ENCODE measurements at regions of chr1 and their contacts with region 1.

Region 1: GRCh38 chr1:248858891-248859889 is at the start of gene ZNF692:
- DNase-seq: peak; percentile 95 to 98
- ATAC-seq: peak; percentile 85 to 94 (median 88)
- H3K4me3 ChIP-seq: peak within 1 kb of the TSS; percentile 66
- H3K4me3 Mint-ChIP-seq: peak within 1 kb of the TSS; percentile 86
- H3K27ac ChIP-seq: peak within 1 kb of the TSS; percentile 92
- H3K27ac Mint-ChIP-seq: peak within 1 kb of the TSS; percentile 90 to 94
- H3K4me1 ChIP-seq: peaks cover 64% of the 10 kb centered on the region
- H3K4me1 Mint-ChIP-seq: peaks cover 47 to 60% of the 10 kb centered on the region in 2 donors
- H3K27me3 ChIP-seq: no peaks in the 10 kb centered on the region
- H3K27me3 Mint-ChIP-seq: no peaks in the 10 kb centered on the region
- CTCF ChIP-seq: peak; percentile 5
- total RNA-seq, gene ZNF692: 50.4 to 58.7 (median 52.3) TPM

Region 2: DNA sequence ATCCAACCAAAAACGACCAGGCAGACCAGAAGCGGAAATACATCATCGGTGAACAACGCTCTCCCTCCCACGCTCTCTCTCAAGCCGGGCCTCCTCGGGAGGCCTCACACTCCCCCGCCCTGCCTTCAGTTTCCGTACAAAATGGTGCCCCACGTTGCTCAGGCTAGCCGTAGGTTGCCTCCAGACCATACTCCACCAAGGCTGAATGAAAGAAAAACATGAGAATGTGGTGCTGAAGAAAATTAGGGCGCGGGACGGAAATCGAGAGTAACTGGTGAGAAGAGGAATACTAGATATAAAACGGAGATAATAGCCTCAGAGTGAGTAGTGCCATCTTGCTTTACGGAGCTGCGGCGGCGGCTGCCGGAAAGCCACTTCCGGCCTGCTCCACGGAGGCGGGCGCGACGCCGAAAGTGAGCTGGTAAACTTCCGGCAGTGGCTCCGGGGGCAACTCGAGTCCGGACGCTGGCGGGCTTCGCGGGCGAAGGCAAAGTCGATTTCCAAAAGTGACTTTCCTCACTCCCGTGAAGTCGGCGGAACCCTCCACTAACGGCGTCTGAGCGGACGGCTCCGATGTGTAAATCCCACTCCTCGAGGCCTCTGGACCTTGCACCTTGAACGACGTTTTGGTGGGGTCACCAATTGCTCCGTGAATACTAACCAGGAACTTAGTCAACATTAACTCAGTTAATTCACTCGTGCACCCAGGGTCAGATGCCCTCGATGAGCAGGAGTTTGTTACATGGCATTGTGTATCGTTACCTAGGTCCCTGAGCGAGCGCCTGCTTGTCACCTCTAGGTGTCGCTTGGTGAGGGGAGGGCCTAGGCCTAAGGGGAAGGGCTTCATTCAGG is 33.1 kb before region 1 on chr1 and contains the start of gene SH3BP5L:
- intact Hi-C with region 1: loop called (anchors 1 kb)
- DNase-seq: peak; percentile 87 to 96
- ATAC-seq: peak; percentile 85 to 95 (median 87)
- H3K4me3 ChIP-seq: peak within 1 kb of the TSS; percentile 93
- H3K4me3 Mint-ChIP-seq: peak within 1 kb of the TSS; percentile 96
- H3K27ac ChIP-seq: peak within 1 kb of the TSS; percentile 99
- H3K27ac Mint-ChIP-seq: peak within 1 kb of the TSS; percentile 96
- H3K4me1 ChIP-seq: peaks cover 46% of the 10 kb centered on the region
- H3K4me1 Mint-ChIP-seq: peaks cover 55 to 56% of the 10 kb centered on the region in 2 donors
- H3K27me3 ChIP-seq: no peaks in the 10 kb centered on the region
- H3K27me3 Mint-ChIP-seq: no peaks in the 10 kb centered on the region
- CTCF ChIP-seq: peak; percentile 79
- total RNA-seq, gene SH3BP5L: 19.0 to 27.5 (median 22.9) TPM

Region 3: DNA sequence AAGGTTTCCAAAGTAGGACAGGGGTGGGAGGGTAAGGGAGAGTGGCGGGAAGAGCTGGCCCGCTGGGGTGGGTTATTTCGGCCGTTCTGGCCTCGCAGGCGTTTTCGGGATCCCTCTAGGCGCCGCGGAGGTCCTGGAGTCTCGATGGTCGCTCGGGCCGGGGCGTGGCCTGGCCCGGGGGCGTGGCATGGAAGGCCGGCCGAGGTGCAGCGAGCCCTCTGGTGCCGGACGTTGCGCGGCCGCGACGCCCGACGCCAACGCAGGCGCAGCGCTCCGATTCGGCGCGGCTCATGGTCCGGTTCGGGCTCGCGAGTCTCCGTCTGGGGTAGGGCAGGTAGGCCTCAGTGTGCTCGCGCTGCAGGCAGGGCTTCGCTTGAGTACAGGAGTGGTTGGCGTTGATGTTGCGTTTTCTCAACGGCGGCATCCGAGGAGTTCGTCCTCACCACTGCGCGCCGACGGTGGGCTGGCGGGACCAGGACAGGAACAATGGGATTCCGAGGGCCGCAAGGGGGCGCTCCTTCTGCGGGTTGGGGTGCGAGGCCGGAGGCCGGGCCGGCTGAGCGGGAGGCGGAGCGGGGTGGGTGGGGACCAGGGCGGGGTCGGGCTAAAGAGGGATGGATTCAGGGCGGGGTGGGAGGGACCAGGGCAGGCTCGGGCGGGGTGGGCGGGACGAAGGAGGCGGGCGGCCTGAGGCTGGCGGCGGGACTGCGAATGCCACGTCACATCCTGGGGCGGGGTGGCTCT is 47.0 kb after region 1 on chr1 and contains the start of gene PGBD2:
- intact Hi-C with region 1: loop called (anchors 1 kb)
- DNase-seq: peak; percentile 92 to 96
- ATAC-seq: peak; percentile 82 to 90 (median 84)
- H3K4me3 ChIP-seq: peak within 1 kb of the TSS; percentile 70
- H3K4me3 Mint-ChIP-seq: peak within 1 kb of the TSS; percentile 94
- H3K27ac ChIP-seq: peak within 1 kb of the TSS; percentile 90
- H3K27ac Mint-ChIP-seq: peak within 1 kb of the TSS; percentile 92 to 93
- H3K4me1 ChIP-seq: peaks cover 14% of the 10 kb centered on the region
- H3K4me1 Mint-ChIP-seq: peaks cover 30 to 33% of the 10 kb centered on the region in 2 donors
- H3K27me3 ChIP-seq: no peaks in the 10 kb centered on the region
- H3K27me3 Mint-ChIP-seq: peaks cover 5 to 12% of the 10 kb centered on the region in 2 donors
- CTCF ChIP-seq: peak; percentile 56
- total RNA-seq, gene PGBD2: 3.1 to 9.2 (median 6.2) TPM